Activated T-helper 1 cell treated with anti-CD3 and anti-CD28 coated beads, Interleukin-12 subunit alpha, Interleukin-12 subunit beta, Interleukin-2, Interleukin-4 antibody, amounts not matched to agents 30 ng/mL and 10 ng/mL and 1 ng/mL, durations not matched to agents 14 hours and 24 hours and 36 hours (primary cell): ENCODE measurements at regions of chr11 and their contacts with region 1.

Region 1: GRCh38 chr11:40885250-40885954 is 574.0 kb downstream of the LRRC4C start:
- DNase-seq: no peak
- H3K4me3 Mint-ChIP-seq: no peak overlapping the region
- H3K27ac Mint-ChIP-seq: no peak overlapping the region
- H3K4me1 Mint-ChIP-seq: no peaks in the 10 kb centered on the region
- H3K27me3 Mint-ChIP-seq: no peaks in the 10 kb centered on the region

Region 2: GRCh38 chr11:40826601-40827000 is 58.8 kb before region 1 on chr11:
- intact Hi-C with region 1: loop called (anchors 10 kb)
- DNase-seq: no peak
- H3K4me3 Mint-ChIP-seq: no peak overlapping the region
- H3K27ac Mint-ChIP-seq: no peak overlapping the region
- H3K4me1 Mint-ChIP-seq: no peaks in the 10 kb centered on the region
- H3K27me3 Mint-ChIP-seq: no peaks in the 10 kb centered on the region

Region 3: GRCh38 chr11:40938002-40938401 is 52.6 kb after region 1 on chr11:
- intact Hi-C with region 1: loop called (anchors 10 kb)
- DNase-seq: no peak
- H3K4me3 Mint-ChIP-seq: no peak overlapping the region
- H3K27ac Mint-ChIP-seq: no peak overlapping the region
- H3K4me1 Mint-ChIP-seq: no peaks in the 10 kb centered on the region
- H3K27me3 Mint-ChIP-seq: no peaks in the 10 kb centered on the region